ENCODE measurements at regions of chr7 and their contacts with region 1.

Region 1: DNA sequence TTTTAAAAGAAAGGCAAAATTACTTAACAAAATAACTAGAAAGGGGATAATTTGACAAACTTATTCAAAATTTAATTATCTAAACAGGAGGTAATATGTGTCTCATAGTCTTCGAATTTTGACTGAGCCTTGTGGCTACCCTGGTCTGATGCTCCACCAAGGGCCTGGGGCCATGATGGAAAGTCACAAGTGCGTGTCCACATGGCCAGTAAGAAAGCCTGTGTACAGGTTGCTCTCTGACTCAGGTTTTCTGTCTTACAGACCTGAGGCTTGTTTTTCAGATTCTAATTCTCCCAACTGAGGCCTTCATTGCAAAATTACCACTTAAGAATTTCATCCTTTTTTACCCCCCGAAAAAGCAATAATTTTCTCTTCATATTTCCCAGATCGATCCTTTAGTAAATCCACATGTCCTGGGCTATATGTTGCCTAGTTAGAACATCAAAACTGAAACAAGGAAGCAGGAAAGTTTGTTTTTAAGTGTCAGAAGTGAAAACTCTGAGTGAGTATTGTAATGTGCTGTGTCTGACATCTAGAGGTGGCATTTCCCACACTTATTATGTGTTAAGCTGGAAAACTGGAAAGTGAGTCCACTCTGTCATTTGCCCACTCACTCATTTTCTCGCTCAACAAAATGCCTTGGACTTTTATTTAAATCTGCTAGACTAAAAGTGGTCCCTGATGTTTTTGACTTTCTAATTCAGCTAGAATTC is 10.0 kb downstream of the CYP3A43 start:
- ATAC-seq: peak in 4 of 8 experiments; percentile 8 to 77 (median 60)
- H3K4me3 ChIP-seq: no peak overlapping the region
- H3K27ac ChIP-seq: no peak overlapping the region
- H3K4me1 ChIP-seq: peaks cover 9 to 10% of the 10 kb centered on the region in 2 donors

Region 2: GRCh38 chr7:99525713-99526440 is 311.9 kb before region 1 on chr7:
- in situ Hi-C with region 1: no loop called
- ATAC-seq: peak in 2 of 8 experiments; percentile 27 to 39
- H3K4me3 ChIP-seq: no peak overlapping the region
- H3K27ac ChIP-seq: no peak overlapping the region
- H3K4me1 ChIP-seq: no peaks in the 10 kb centered on the region

Region 3: DNA sequence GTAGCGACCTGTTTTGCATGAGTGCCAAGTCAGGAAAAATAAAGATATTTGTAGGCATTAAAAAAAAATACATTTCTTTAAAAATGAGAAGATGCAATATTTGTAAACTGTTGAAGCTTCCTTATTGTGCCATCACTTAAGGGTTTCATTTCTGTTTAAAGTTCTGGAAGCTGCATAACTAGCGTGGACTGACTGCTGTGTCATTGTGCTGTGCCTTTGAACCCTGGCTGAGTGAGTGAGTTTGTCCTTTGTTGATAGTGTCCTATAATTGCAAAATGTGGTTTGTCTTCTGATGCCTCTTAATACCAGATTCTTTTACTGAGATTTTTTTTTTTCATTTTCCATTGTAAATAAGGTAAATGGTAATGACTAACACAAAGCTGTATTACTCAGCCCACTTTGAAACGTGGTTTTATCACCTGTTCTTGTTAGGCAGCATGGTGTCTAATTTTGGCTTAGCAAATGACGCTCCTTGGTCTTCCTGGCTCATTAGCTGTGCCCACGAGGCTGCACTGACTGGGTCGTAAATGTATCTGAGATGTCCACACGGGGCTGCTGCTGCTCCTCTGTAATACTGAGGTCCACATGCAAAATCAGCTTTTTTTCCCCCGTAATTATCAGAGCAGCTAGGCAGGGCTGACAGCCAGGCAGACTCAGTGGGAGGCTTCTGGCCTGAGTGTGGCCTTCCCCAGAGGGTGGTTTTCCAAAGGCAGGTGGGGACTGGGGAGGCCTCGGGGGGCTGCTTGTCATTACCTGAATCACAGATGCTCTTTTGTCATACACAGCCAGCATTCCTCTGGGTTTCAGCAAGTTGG is 206.3 kb before region 1 on chr7:
- in situ Hi-C with region 1: loop called in 1 of 9 experiments (anchors 25 kb)
- ATAC-seq: peak in 5 of 8 experiments; percentile 44 to 86 (median 50)
- H3K4me3 ChIP-seq: no peak overlapping the region
- H3K27ac ChIP-seq: no peak overlapping the region
- H3K4me1 ChIP-seq: no peaks in the 10 kb centered on the region

Region 4: GRCh38 chr7:100071018-100071723 is 233.4 kb after region 1 on chr7:
- in situ Hi-C with region 1: no loop called
- ATAC-seq: no peak
- H3K4me3 ChIP-seq: no peak overlapping the region
- H3K27ac ChIP-seq: no peak overlapping the region
- H3K4me1 ChIP-seq: no peaks in the 10 kb centered on the region

Measured in motor neuron (in vitro differentiated cells).